GM13977 (cell line): ENCODE measurements at regions of chr7 and their contacts with region 1.

Region 1: DNA sequence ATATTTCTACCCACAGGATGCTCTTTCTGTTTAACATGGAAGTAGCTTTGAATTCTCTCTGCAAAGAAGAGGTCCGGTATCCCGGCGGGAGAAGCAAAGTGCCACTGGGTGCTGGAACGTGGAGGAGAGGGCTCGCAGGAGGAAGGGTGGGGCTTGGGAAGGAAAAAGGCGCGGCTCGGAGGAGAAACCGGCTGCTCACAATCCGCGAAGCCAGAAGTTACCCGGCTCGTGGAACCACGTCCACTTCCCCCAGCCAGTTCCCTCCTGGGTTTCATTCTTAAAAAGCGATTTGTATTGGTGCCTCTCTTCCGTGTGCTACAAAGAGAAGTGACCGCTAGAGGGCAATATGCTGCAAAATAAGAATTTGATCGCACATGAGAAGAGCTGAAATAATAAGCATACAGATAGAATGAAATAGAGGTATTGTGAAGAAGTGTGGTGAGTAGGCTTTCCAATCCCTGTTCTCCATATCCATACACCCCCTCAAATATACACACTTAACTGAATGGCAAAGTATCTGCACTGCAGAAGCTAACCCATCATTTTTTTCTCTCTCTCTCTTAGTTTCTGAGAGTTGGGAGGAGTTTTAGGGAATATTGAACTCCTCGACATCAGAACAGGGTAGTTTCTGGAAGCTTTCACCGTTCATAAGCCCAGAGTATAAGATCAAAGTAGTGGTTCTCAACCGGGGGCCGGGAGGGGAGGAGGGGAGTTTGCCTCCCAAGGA is 31.1 kb downstream of the TRIL start:
- DNase-seq: peak; percentile 75
- CTCF ChIP-seq: peak; percentile 83

Region 2: DNA sequence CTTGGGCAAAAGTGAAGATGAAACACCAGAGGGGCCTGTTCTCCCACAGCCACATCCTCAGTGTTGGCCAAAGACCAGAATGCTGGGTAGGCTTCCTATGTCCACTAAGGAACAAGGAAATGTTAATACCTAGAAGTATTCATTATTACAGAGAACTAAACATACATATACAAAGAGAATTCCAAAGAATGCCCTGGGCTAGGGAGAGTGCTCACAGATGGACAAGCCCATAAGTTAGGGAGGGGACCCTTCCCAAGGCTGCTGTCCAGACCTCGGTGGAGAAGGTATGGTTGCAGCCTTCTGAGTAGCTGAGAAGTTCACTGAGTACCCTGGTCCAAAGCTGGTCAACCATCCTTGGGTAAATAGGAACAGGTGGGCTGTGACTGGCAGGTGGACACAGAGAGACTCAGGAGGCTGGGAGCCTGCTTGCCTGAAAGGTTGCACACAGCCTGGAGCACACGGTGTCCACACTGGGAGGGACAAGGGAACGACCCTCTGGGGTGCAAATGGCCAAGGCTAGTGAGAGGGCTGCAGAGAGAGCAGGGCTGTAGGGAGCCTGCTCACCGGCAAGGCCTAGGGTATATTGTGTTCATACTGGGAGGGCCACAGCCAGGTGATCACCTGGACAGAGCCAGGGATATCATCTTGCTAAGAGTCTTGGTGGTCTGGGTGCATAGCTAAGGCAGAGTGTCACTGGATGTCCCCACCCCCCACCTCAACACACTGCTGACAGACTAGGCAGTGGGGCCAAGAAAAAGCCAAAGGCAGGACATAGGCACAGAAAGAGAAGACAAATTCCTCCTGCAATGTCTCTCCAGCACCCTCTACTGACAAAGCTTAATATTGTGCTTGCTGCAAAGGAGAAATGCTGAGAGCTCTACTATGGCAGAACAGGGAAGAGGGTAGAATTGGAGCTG is 179.0 kb after region 1 on chr7:
- in situ Hi-C with region 1: loop called (anchors 10 kb)
- DNase-seq: peak; percentile 22
- CTCF ChIP-seq: peak; percentile 80

Region 3: DNA sequence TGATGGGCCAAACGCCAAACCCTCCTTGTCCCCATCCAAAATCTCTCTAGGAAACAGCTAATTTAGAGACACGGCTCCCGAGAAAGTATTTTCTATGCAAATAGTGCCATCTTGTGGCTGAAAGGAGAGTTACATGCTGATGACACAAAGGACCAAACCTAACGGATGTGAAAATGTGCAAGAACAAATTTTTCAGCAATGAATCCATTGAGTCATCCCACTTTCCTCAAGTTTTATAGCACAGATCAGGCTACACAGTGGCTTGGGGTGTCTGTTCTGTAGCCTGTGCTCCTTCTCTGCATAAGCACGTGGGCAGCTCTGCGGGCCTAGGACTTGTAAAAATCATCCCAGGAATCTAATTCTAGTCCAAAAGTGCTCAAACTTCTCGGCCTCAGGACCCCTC is 481.8 kb after region 1 on chr7:
- in situ Hi-C with region 1: loop called (anchors 10 kb)
- DNase-seq: peak; percentile 69
- CTCF ChIP-seq: peak; percentile 82